Caco-2 (cell line): ENCODE measurements at regions of chr3 and their contacts with region 1.

Region 1: DNA sequence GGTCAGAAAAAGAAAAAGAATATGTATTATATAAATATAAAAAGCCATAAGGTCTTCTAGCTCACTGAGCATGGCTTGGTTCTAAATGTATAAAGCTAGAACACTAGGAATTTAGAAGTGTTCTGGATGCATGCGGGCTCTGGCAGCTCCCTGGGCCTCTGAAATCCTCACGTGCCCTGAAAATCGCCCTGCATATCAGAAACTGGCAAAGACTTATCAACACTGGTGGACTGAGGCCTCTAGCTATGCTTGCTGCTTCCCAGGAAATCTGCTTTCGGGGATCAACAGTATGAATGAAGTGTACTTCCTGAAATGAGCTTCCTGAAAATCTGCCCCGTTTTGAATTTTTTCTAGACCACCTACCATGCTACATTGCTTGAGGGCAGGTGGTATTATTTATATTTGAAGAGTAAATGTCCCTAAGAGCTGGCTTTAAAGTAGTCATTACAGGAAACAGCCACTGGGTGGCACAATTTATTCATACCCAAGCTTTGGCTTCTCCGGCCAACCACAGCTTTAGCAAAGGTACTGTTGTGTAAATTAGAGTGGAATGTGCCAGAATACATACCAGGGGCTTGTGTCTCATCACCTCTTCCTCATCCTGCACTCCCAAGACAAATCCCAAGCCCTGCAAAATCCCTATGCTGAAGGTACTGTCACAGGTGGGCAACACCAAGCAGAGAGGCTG is 17.7 kb downstream of the CRTAP start:
- DNase-seq: peak; percentile 59 to 76
- H3K4me3 ChIP-seq: no peak overlapping the region
- H3K4me3 Mint-ChIP-seq: no peak overlapping the region
- H3K27ac Mint-ChIP-seq: peak overlapping the region; percentile 77
- H3K4me1 ChIP-seq: peaks cover 18% of the 10 kb centered on the region
- H3K4me1 Mint-ChIP-seq: no peaks in the 10 kb centered on the region
- H3K27me3 ChIP-seq: no peaks in the 10 kb centered on the region
- H3K27me3 Mint-ChIP-seq: no peaks in the 10 kb centered on the region
- CTCF ChIP-seq: peak; percentile 59 to 75

Region 2: DNA sequence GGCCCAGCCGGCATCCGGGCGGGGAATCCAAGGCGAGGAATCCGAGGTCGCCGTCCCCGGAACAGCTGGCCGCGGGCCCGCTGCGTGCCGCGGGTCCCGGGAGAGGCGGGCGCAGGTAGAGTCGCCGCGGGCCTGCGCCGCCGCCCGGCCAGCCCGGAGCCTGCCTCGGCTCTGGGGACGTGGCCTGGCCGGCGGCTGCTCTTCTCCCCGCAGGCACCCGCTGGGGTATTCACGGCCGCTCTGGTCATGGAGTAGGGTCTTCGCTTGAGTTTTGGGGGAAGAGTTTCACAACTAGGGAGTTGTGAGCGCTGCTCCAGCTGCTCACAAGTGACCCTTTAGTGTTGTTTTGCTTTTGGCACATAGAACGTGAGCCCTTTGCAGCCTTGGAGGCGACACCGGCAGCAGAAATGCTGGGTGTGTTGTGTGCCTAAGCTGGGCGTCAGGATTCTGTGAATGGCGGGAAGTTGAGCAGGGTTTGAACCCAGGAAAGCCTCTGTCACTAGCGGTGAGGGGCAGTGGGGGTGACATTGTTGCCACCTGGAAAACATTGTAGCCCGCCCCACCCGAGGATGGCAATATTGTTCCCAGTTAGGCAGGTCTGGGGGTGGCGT is 309.7 kb before region 1 on chr3:
- CTCF ChIA-PET with region 1: no interaction called
- POLR2A ChIA-PET with region 1: no interaction called
- intact Hi-C with region 1: no loop called
- DNase-seq: peak in 1 of 2 experiments; percentile 50
- H3K4me3 ChIP-seq: peak overlapping the region; percentile 78
- H3K4me3 Mint-ChIP-seq: peak overlapping the region; percentile 86
- H3K27ac Mint-ChIP-seq: peak overlapping the region; percentile 7
- H3K4me1 ChIP-seq: peaks cover 48% of the 10 kb centered on the region
- H3K4me1 Mint-ChIP-seq: peaks cover 17% of the 10 kb centered on the region
- H3K27me3 ChIP-seq: no peaks in the 10 kb centered on the region
- H3K27me3 Mint-ChIP-seq: no peaks in the 10 kb centered on the region
- CTCF ChIP-seq: no peak

Region 3: GRCh38 chr3:32947789-32948238 is 183.7 kb before region 1 on chr3:
- CTCF ChIA-PET with region 1: interaction called, 6 read pairs
- POLR2A ChIA-PET with region 1: no interaction called
- intact Hi-C with region 1: loop called (anchors 1 kb)
- DNase-seq: peak; percentile 82 to 85
- H3K4me3 ChIP-seq: no peak overlapping the region
- H3K4me3 Mint-ChIP-seq: no peak overlapping the region
- H3K27ac Mint-ChIP-seq: no peak overlapping the region
- H3K4me1 ChIP-seq: no peaks in the 10 kb centered on the region
- H3K4me1 Mint-ChIP-seq: peaks cover 10% of the 10 kb centered on the region
- H3K27me3 ChIP-seq: no peaks in the 10 kb centered on the region; the same call in 1 of the 2 replicates
- H3K27me3 Mint-ChIP-seq: no peaks in the 10 kb centered on the region
- CTCF ChIP-seq: peak; percentile 54 to 82

Region 4: DNA sequence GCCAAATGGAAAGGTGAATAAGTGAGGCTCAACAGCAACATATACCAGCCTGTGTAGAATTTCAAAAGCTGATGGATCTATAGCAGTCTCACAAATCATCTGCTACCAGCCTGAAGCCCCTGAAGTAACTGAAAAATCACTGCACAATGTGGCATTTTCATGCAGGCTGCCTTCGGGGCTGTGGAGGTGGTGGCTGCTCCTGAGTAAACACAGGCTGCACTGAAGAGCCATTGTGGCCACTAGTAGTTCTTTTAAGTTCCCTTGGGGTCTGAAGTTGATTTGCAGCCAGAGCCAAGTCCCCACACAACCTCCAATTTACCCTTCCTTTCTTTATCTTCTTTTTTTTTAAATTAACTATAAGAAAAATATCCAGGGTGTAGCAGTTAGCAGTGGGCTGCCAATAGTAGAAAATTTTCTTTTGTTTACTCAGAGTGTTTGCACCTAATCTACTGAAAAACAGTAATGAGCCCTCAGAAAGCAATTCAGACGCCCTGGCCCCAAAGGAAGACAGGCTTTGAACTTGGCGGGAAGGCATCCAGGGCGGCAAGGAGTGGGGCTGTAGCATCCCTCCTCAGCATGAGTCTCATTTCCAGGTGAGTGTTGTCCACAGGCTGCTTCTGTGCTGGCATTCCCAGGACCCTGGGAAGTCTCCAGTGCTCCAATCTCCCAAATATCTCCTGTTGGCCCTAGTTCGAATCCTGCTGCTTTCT is 100.4 kb after region 1 on chr3:
- CTCF ChIA-PET with region 1: no interaction called
- POLR2A ChIA-PET with region 1: no interaction called
- intact Hi-C with region 1: loop called (anchors 5 kb)
- DNase-seq: peak in 1 of 2 experiments; percentile 5
- H3K4me3 ChIP-seq: no peak overlapping the region
- H3K4me3 Mint-ChIP-seq: no peak overlapping the region
- H3K27ac Mint-ChIP-seq: no peak overlapping the region
- H3K4me1 ChIP-seq: no peaks in the 10 kb centered on the region
- H3K4me1 Mint-ChIP-seq: no peaks in the 10 kb centered on the region
- H3K27me3 ChIP-seq: no peaks in the 10 kb centered on the region
- H3K27me3 Mint-ChIP-seq: no peaks in the 10 kb centered on the region
- CTCF ChIP-seq: no peak

Region 5: GRCh38 chr3:33318709-33319380 is 187.4 kb after region 1 on chr3:
- CTCF ChIA-PET with region 1: interaction called, 15 read pairs
- POLR2A ChIA-PET with region 1: no interaction called
- intact Hi-C with region 1: loop called (anchors 1 kb)
- DNase-seq: peak in 1 of 2 experiments; percentile 51
- H3K4me3 ChIP-seq: no peak overlapping the region
- H3K4me3 Mint-ChIP-seq: peak overlapping the region; percentile 65
- H3K27ac Mint-ChIP-seq: peak overlapping the region; percentile 80
- H3K4me1 ChIP-seq: peaks cover 34% of the 10 kb centered on the region
- H3K4me1 Mint-ChIP-seq: peaks cover 34% of the 10 kb centered on the region
- H3K27me3 ChIP-seq: no peaks in the 10 kb centered on the region
- H3K27me3 Mint-ChIP-seq: no peaks in the 10 kb centered on the region
- CTCF ChIP-seq: peak in 1 of 2 experiments; percentile 47

Region 6: GRCh38 chr3:33717866-33718594 is 586.6 kb after region 1 on chr3 and contains the start of gene CLASP2:
- CTCF ChIA-PET with region 1: no interaction called
- POLR2A ChIA-PET with region 1: no interaction called
- intact Hi-C with region 1: loop called (anchors 10 kb)
- DNase-seq: peak; percentile 89
- H3K4me3 ChIP-seq: peak within 1 kb of the TSS; percentile 90
- H3K4me3 Mint-ChIP-seq: no peak within 1 kb of the TSS
- H3K27ac Mint-ChIP-seq: no peak within 1 kb of the TSS
- H3K4me1 ChIP-seq: peaks cover 11% of the 10 kb centered on the region; the same call in 1 of the 2 replicates
- H3K4me1 Mint-ChIP-seq: no peaks in the 10 kb centered on the region
- H3K27me3 ChIP-seq: no peaks in the 10 kb centered on the region
- H3K27me3 Mint-ChIP-seq: no peaks in the 10 kb centered on the region
- CTCF ChIP-seq: no peak
- total RNA-seq, gene CLASP2: 65.6 and 66.3 TPM in 2 replicates